ENCODE measurements at regions of chr15 and their contacts with region 1.

Region 1: GRCh38 chr15:64622410-64623260 is 152.8 kb downstream of the RBPMS2 start:
- DNase-seq: peak; percentile 25 to 86 (median 60)
- ATAC-seq: peak; percentile 78
- H3K4me3 ChIP-seq: peak overlapping the region; percentile 26 to 29
- H3K4me3 Mint-ChIP-seq: peak overlapping the region; percentile 75
- H3K27ac ChIP-seq: peak overlapping the region; percentile 42 to 74
- H3K27ac Mint-ChIP-seq: peak overlapping the region; percentile 91
- H3K4me1 ChIP-seq: peaks cover 96% of the 10 kb centered on the region
- H3K4me1 Mint-ChIP-seq: peaks cover 95% of the 10 kb centered on the region
- H3K27me3 ChIP-seq: no peaks in the 10 kb centered on the region
- H3K27me3 Mint-ChIP-seq: no peaks in the 10 kb centered on the region
- CTCF ChIP-seq: no peak

Region 2: DNA sequence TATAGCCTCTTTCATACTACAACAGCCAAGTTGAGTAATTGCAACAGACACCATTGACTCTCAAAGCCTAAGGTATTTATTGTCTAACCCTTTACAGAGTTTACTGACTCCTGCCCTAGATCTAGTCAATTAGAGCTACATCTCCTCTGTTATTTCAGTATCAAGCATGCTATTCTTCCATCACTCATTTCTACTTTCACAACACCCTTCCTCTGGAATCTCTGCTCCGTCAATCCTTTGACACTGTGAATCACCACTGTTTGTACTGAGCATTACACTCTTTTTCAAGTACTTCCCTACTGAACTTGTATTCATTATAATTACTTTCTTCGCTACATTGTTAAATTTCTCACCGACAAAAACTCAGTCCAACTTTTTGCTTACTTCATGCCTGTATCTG is 40.4 kb before region 1 on chr15:
- CTCF ChIA-PET with region 1: interaction called, 3 read pairs
- POLR2A ChIA-PET with region 1: no interaction called
- intact Hi-C with region 1: loop called in 1 of 2 experiments (anchors 5 kb)
- DNase-seq: no peak
- ATAC-seq: no peak
- H3K4me3 ChIP-seq: no peak overlapping the region
- H3K4me3 Mint-ChIP-seq: no peak overlapping the region
- H3K27ac ChIP-seq: no peak overlapping the region
- H3K27ac Mint-ChIP-seq: peak overlapping the region; percentile 6
- H3K4me1 ChIP-seq: peaks cover 23% of the 10 kb centered on the region
- H3K4me1 Mint-ChIP-seq: peaks cover 43% of the 10 kb centered on the region
- H3K27me3 ChIP-seq: no peaks in the 10 kb centered on the region
- H3K27me3 Mint-ChIP-seq: no peaks in the 10 kb centered on the region
- CTCF ChIP-seq: no peak

Region 3: DNA sequence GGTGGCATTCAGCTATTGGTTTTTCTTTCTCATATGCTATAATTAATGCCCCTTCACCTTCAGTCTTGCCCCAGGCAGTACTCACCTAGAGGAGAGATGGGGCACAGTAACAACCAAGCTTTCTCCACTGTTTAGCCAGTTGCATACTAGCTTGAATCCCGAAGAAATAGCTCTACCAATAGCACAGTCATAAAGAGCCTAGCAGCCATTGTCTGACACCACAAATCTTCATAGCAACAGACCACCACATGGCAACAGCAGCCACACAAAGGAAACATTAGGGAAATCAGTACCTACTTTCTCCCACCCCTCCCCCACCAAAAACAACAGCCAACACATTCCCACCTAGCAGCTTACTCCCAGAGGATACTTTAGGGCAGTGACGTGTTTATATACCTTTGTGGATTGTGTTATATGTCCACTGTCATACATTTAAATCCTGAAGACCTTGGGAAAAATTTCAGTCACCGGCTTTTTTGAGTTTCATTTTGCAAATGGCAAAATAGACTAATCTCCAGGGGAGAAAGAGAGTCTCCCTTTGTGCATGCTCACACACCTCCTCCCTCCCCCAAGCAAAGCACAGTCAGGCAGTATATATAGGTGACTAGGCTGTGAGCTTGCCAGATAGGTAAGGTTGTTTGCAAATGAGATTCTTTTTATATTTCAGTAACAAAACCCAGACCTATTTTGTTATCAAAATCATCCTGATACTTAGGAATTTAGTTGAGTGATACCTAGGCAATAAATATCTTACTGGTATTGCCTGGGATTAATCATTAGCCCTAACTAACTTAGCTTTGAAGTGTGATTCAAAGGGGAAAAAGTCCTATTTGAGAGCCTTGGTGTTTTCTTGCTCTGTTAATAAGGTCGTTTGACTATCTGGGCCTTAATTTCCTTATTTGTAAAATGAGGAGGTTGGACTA is 12.2 kb after region 1 on chr15:
- CTCF ChIA-PET with region 1: no interaction called
- POLR2A ChIA-PET with region 1: no interaction called
- intact Hi-C with region 1: loop called in 1 of 2 experiments (anchors 1 kb)
- DNase-seq: peak in 5 of 9 experiments; percentile 27 to 78 (median 35)
- ATAC-seq: peak; percentile 64
- H3K4me3 ChIP-seq: peak overlapping the region; percentile 9 to 23
- H3K4me3 Mint-ChIP-seq: peak overlapping the region; percentile 68
- H3K27ac ChIP-seq: peak overlapping the region; percentile 36 to 77
- H3K27ac Mint-ChIP-seq: peak overlapping the region; percentile 86
- H3K4me1 ChIP-seq: peaks cover 74% of the 10 kb centered on the region
- H3K4me1 Mint-ChIP-seq: peaks cover 72% of the 10 kb centered on the region
- H3K27me3 ChIP-seq: no peaks in the 10 kb centered on the region
- H3K27me3 Mint-ChIP-seq: no peaks in the 10 kb centered on the region
- CTCF ChIP-seq: no peak

Measured in CD8-positive, alpha-beta T cell (primary cell).